AG04450 (cell line): ENCODE measurements at regions of chr6 and their contacts with region 1.

Region 1: GRCh38 chr6:31087494-31088089 is 24.8 kb downstream of the C6orf15 start:
- DNase-seq: peak; percentile 64
- H3K4me3 ChIP-seq: no peak overlapping the region
- H3K27ac ChIP-seq: no peak overlapping the region
- H3K27me3 ChIP-seq: no peaks in the 10 kb centered on the region
- CTCF ChIP-seq: peak; percentile 76

Region 2: GRCh38 chr6:30730601-30731435 is 356.8 kb before region 1 on chr6:
- CTCF ChIA-PET with region 1: interaction called, 11 read pairs
- POLR2A ChIA-PET with region 1: interaction called, 3 read pairs
- DNase-seq: no peak
- H3K4me3 ChIP-seq: no peak overlapping the region
- H3K27ac ChIP-seq: no peak overlapping the region
- H3K27me3 ChIP-seq: no peaks in the 10 kb centered on the region
- CTCF ChIP-seq: peak; percentile 50; the same call in 1 of the 2 replicates

Region 3: GRCh38 chr6:30828027-30828960 is 259.3 kb before region 1 on chr6:
- CTCF ChIA-PET with region 1: interaction called, 93 read pairs
- POLR2A ChIA-PET with region 1: interaction called, 3 read pairs
- DNase-seq: peak; percentile 84
- H3K4me3 ChIP-seq: no peak overlapping the region
- H3K27ac ChIP-seq: peak overlapping the region; percentile 78
- H3K27me3 ChIP-seq: no peaks in the 10 kb centered on the region
- CTCF ChIP-seq: peak; percentile 97

Region 4: DNA sequence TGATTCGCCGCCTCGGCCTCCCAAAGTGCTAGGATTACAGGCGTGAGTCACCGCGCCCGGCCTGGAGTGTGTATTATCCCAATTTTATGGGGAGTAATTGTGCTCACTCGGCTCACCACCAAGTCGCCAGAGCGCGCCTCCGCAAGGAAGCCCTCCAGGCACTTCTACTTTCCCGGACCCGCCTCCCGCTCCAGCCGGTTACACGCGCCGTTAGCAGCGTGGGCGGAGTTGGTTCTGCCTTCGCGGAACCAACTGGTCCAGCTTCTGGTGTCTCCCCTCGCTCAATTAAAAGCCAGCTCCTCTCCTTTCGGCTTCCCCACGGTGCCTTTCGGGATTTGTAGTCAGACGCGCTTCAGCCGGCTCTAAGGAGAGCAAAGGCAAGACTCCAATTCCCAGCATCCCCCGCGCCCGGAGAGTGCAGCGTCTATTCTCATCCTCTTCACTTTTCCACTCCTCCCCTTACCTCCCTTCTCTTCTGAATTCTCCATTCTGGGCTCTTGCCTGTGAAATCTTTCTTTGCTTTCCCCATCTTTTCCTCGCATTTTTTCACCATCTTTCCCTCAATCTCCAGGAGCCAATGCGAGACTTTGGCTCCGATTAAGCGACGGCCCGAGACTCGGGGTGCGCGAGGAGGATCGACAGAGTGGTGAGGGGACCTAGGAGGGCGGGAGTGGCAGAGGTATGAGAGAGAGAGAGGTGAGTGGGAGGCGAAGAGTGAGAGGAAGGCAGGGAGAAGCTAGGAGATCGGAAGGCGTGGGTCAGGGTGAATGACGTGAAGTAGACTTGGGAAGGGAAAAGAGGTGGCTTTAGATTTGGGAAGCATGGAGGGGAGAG is 179.6 kb before region 1 on chr6 and contains the start of gene GTF2H4:
- CTCF ChIA-PET with region 1: interaction called, 183 read pairs
- POLR2A ChIA-PET with region 1: no interaction called
- DNase-seq: peak; percentile 96
- H3K4me3 ChIP-seq: peak within 1 kb of the TSS; percentile 90
- H3K27ac ChIP-seq: peak within 1 kb of the TSS; percentile 47
- H3K27me3 ChIP-seq: no peaks in the 10 kb centered on the region
- CTCF ChIP-seq: no peak
- polyA plus RNA-seq, gene GTF2H4: 31.9 and 33.0 TPM in 2 replicates

Region 5: GRCh38 chr6:30942338-30943060 is 145.1 kb before region 1 on chr6:
- CTCF ChIA-PET with region 1: interaction called, 30 read pairs
- POLR2A ChIA-PET with region 1: no interaction called
- DNase-seq: peak; percentile 44
- H3K4me3 ChIP-seq: 0 out of 2 replicates have a peak overlapping the region, but pooled peaks have one; percentile 5
- H3K27ac ChIP-seq: no peak overlapping the region
- H3K27me3 ChIP-seq: peaks cover 51% of the 10 kb centered on the region
- CTCF ChIP-seq: peak; percentile 78

Region 6: GRCh38 chr6:31114970-31115849 is 27.6 kb after region 1 on chr6:
- CTCF ChIA-PET with region 1: interaction called, 30 read pairs
- POLR2A ChIA-PET with region 1: interaction called, 6 read pairs
- DNase-seq: no peak
- H3K4me3 ChIP-seq: peak overlapping the region; percentile 41
- H3K27ac ChIP-seq: peak overlapping the region; percentile 77
- H3K27me3 ChIP-seq: peaks cover 10% of the 10 kb centered on the region
- CTCF ChIP-seq: 0 out of 2 replicates have a peak, but pooled peaks have one; percentile 24